Activated naive CD4-positive, alpha-beta T cell treated with anti-CD3 and anti-CD28 coated beads for 36 hours (primary cell): ENCODE measurements at regions of chr1 and their contacts with region 1.

Region 1: DNA sequence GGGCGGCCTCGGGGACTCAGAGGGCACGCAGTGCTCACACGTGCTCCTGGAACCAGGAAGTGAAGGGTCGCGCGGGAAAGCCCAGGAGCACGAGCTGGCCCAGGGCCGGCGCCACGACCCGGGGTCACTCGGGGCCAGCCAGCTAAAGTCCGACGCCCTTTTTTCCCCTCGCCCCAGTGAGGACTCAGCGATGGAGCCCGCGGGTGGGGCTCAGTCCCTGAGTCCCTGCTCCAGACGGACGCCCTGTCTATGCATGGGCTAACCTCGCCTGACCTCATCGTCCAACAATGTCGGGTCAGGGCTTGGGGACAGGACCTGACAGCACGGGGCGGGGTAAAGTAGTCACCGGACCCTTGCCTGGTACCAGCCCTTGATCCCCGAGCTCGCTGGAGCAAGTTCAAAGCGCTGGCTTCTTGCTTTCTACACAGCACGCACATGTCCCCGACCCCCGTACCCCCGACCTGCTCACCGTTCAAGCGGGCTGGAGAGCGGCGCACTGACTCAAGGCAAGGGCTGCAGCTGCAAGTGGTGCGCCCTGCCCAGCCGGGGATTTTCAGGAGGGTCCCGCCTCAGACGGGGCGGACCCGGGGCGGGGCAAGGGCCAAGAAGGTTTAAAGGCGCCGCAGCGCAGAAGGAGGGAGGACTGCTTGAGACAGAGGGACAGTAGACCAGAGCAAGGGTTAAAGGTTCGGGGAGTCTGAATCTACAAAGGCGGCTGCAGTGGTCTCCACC is at the start of gene TAGLN2:
- DNase-seq: peak; percentile 89
- H3K4me3 Mint-ChIP-seq: peak within 1 kb of the TSS; percentile 91
- H3K27ac Mint-ChIP-seq: peak within 1 kb of the TSS; percentile 93
- H3K4me1 Mint-ChIP-seq: peaks cover 42% of the 10 kb centered on the region
- H3K27me3 Mint-ChIP-seq: no peaks in the 10 kb centered on the region
- total RNA-seq, gene TAGLN2: 453 to 454 TPM

Region 2: DNA sequence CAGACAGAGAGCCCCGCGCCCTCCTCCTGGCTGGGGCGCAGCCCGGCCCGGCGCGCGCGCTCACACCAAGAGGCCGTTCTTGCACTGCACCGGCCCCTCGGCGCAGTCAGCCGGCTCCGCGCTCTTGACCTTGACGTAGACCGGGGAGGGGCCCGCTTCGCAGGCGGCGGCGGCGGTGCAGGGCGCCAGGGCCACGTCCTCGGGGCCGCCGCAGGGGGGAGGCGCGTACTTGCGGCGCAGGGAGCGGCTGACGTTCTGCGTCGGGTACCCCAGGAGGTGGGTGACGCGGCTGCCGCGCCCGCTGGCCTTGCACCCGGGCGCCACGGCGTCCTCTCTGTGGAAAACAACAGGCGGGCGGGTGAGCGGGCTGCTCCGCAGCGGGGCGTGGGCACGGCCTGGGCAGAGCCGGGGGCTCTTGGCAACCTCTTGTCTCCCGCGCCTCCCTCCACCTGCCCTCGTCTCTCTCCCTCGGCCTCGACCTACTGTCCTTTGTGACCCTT is 70.4 kb before region 1 on chr1:
- CTCF ChIA-PET with region 1: no interaction called
- intact Hi-C with region 1: loop called (anchors 1 kb)
- DNase-seq: peak; percentile 73
- H3K4me3 Mint-ChIP-seq: peak overlapping the region; percentile 81
- H3K27ac Mint-ChIP-seq: no peak overlapping the region
- H3K4me1 Mint-ChIP-seq: peaks cover 10% of the 10 kb centered on the region
- H3K27me3 Mint-ChIP-seq: no peaks in the 10 kb centered on the region

Region 3: GRCh38 chr1:160205242-160206035 is 280.3 kb after region 1 on chr1 and contains the start of gene PEA15:
- CTCF ChIA-PET with region 1: no interaction called
- intact Hi-C with region 1: loop called (anchors 5 kb)
- DNase-seq: peak; percentile 79
- H3K4me3 Mint-ChIP-seq: peak within 1 kb of the TSS; percentile 85
- H3K27ac Mint-ChIP-seq: peak within 1 kb of the TSS; percentile 87
- H3K4me1 Mint-ChIP-seq: peaks cover 46% of the 10 kb centered on the region
- H3K27me3 Mint-ChIP-seq: no peaks in the 10 kb centered on the region
- total RNA-seq, gene PEA15: 34.3 to 42.0 TPM